Activated CD4-positive, alpha-beta memory T cell treated with anti-CD3 and anti-CD28 coated beads, Interleukin-2, amount 10 ng/mL, durations not matched to agents 7 days and 5 days (primary cell): ENCODE measurements at regions of chr5 and their contacts with region 1.

Region 1: GRCh38 chr5:137778772-137779564 is 24.8 kb upstream of the HNRNPA0 start:
- DNase-seq: no peak
- H3K4me3 Mint-ChIP-seq: no peak overlapping the region
- H3K27ac Mint-ChIP-seq: no peak overlapping the region
- H3K4me1 Mint-ChIP-seq: no peaks in the 10 kb centered on the region
- H3K27me3 Mint-ChIP-seq: peaks cover 13% of the 10 kb centered on the region

Region 2: GRCh38 chr5:137791387-137791786 is 12.4 kb after region 1 on chr5:
- CTCF ChIA-PET with region 1: interaction called, 11 read pairs
- POLR2A ChIA-PET with region 1: no interaction called
- DNase-seq: no peak
- H3K4me3 Mint-ChIP-seq: no peak overlapping the region
- H3K27ac Mint-ChIP-seq: no peak overlapping the region
- H3K4me1 Mint-ChIP-seq: no peaks in the 10 kb centered on the region
- H3K27me3 Mint-ChIP-seq: peaks cover 10% of the 10 kb centered on the region

Region 3: DNA sequence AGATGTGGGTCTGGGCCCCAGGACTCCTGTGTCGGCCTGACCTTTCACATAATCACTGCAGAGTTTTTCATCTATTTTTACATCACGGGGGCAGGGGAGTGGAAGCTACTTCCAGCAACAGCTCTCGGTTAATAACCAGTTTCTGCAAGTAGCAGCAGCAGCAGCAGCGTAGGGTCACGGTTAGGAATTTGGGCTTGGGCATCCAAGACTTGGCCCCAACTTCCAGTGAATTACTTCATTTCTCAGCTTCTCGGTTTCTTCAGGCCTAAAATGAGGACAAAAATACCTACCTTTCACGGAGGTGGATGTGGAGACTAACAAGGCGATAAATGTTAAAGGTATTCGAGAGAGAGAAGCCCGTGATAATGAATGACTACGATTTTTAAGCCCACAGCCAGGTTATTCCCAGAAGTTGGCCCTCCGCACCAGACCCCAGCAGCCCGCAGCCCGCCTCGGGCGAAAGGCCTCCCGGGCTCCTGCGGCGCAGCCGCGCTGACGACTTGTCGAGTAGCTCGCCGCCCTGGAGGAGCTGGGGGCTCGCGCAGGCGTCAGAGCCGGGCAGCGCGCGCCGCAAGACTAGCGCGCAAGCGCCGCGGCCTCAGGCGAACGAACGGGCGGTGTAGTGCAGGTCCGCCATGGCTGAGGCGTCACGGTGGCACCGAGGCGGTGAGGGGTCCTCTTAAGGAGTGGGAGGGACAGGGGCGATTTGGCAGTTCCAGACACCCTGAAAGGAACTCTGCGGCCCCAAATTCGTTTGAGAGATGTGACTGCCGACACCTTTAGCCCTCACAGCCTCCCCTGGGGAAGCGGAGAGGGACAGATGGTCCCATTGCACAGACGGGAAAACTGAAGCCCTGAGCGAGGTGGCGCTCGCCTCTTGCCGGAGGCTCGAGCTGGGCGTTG is 110.1 kb after region 1 on chr5 and contains the start of gene PKD2L2:
- CTCF ChIA-PET with region 1: interaction called, 14 read pairs
- POLR2A ChIA-PET with region 1: no interaction called
- DNase-seq: peak; percentile 85
- H3K4me3 Mint-ChIP-seq: peak within 1 kb of the TSS; percentile 83
- H3K27ac Mint-ChIP-seq: peak within 1 kb of the TSS; percentile 86
- H3K4me1 Mint-ChIP-seq: peaks cover 16% of the 10 kb centered on the region
- H3K27me3 Mint-ChIP-seq: peaks cover 3% of the 10 kb centered on the region
- total RNA-seq, gene PKD2L2: 0.30 TPM in 1 of 2 experiments, not detected in the other